Activated CD8-positive, alpha-beta T cell treated with anti-CD3 and anti-CD28 coated beads for 36 hours (primary cell): ENCODE measurements at regions of chr1 and their contacts with region 1.

Region 1: GRCh38 chr1:156728597-156729462 is at the start of gene ISG20L2:
- DNase-seq: peak; percentile 99
- ATAC-seq: peak; percentile 94
- H3K4me3 Mint-ChIP-seq: no peak within 1 kb of the TSS
- H3K27ac Mint-ChIP-seq: no peak within 1 kb of the TSS
- H3K4me1 Mint-ChIP-seq: peaks cover 23% of the 10 kb centered on the region
- H3K27me3 Mint-ChIP-seq: no peaks in the 10 kb centered on the region
- CTCF ChIP-seq: no peak
- total RNA-seq, gene ISG20L2: 40.6 to 44.5 TPM

Region 2: GRCh38 chr1:156652131-156652991 is 76.5 kb before region 1 on chr1:
- CTCF ChIA-PET with region 1: interaction called, 69 read pairs
- POLR2A ChIA-PET with region 1: no interaction called
- intact Hi-C with region 1: no loop called
- DNase-seq: peak; percentile 35
- ATAC-seq: no peak
- H3K4me3 Mint-ChIP-seq: no peak overlapping the region
- H3K27ac Mint-ChIP-seq: no peak overlapping the region
- H3K4me1 Mint-ChIP-seq: peaks cover 9% of the 10 kb centered on the region
- H3K27me3 Mint-ChIP-seq: peaks cover 74% of the 10 kb centered on the region
- CTCF ChIP-seq: no peak

Region 3: GRCh38 chr1:156689035-156689952 is 39.5 kb before region 1 on chr1:
- CTCF ChIA-PET with region 1: interaction called, 396 read pairs
- POLR2A ChIA-PET with region 1: interaction called, 9 read pairs
- intact Hi-C with region 1: loop called (anchors 2 kb)
- DNase-seq: peak; percentile 86
- ATAC-seq: peak; percentile 98
- H3K4me3 Mint-ChIP-seq: no peak overlapping the region
- H3K27ac Mint-ChIP-seq: no peak overlapping the region
- H3K4me1 Mint-ChIP-seq: peaks cover 29% of the 10 kb centered on the region
- H3K27me3 Mint-ChIP-seq: peaks cover 51% of the 10 kb centered on the region
- CTCF ChIP-seq: peak; percentile 95

Region 4: GRCh38 chr1:156746728-156747631 is 18.1 kb after region 1 on chr1:
- CTCF ChIA-PET with region 1: interaction called, 80 read pairs
- POLR2A ChIA-PET with region 1: interaction called, 89 read pairs
- intact Hi-C with region 1: no loop called
- DNase-seq: peak; percentile 85
- ATAC-seq: peak; percentile 22
- H3K4me3 Mint-ChIP-seq: peak overlapping the region; percentile 92
- H3K27ac Mint-ChIP-seq: peak overlapping the region; percentile 98
- H3K4me1 Mint-ChIP-seq: peaks cover 58% of the 10 kb centered on the region
- H3K27me3 Mint-ChIP-seq: no peaks in the 10 kb centered on the region
- CTCF ChIP-seq: no peak

Region 5: GRCh38 chr1:156773607-156774006 is 44.8 kb after region 1 on chr1:
- CTCF ChIA-PET with region 1: interaction called, 92 read pairs
- POLR2A ChIA-PET with region 1: interaction called, 35 read pairs
- intact Hi-C with region 1: loop called (anchors 5 kb)
- DNase-seq: no peak
- ATAC-seq: peak; percentile 25
- H3K4me3 Mint-ChIP-seq: no peak overlapping the region
- H3K27ac Mint-ChIP-seq: no peak overlapping the region
- H3K4me1 Mint-ChIP-seq: peaks cover 68% of the 10 kb centered on the region
- H3K27me3 Mint-ChIP-seq: no peaks in the 10 kb centered on the region
- CTCF ChIP-seq: peak; percentile 19

Region 6: DNA sequence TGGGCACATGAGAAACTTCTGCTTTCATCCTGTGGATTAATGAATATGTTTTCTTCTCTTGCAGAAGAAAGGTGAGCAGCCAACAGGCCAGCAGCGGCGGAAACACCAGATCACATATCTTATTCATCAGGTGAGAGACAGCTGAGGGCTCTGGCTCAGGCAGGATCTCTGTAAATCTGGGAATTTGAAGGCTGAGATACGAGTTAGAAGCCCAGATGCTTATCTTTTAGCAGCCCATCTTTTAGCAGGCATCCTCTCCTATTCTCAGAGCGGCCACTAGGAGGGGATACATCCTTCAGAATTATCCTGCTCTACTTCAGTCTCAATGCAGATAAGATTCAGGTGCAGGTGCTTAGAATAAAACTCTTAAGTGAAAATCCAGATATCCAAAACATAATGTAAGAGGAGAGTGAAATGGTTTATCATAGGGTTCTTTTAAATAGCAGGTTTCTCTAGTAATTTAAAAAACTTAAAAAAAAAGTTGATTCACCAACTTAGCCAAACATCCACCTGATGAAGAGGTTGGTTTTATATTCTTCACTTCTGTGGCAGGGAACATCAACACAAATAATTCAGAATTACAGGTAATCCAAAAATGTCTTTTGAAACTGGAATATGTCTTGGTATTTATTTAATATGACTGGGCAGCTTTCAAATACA is 68.5 kb after region 1 on chr1:
- CTCF ChIA-PET with region 1: interaction called, 25 read pairs
- POLR2A ChIA-PET with region 1: interaction called, 3 read pairs
- intact Hi-C with region 1: no loop called
- DNase-seq: peak; percentile 77
- ATAC-seq: peak; percentile 84
- H3K4me3 Mint-ChIP-seq: no peak overlapping the region
- H3K27ac Mint-ChIP-seq: no peak overlapping the region
- H3K4me1 Mint-ChIP-seq: peaks cover 6% of the 10 kb centered on the region
- H3K27me3 Mint-ChIP-seq: no peaks in the 10 kb centered on the region
- CTCF ChIP-seq: peak; percentile 91

Region 7: DNA sequence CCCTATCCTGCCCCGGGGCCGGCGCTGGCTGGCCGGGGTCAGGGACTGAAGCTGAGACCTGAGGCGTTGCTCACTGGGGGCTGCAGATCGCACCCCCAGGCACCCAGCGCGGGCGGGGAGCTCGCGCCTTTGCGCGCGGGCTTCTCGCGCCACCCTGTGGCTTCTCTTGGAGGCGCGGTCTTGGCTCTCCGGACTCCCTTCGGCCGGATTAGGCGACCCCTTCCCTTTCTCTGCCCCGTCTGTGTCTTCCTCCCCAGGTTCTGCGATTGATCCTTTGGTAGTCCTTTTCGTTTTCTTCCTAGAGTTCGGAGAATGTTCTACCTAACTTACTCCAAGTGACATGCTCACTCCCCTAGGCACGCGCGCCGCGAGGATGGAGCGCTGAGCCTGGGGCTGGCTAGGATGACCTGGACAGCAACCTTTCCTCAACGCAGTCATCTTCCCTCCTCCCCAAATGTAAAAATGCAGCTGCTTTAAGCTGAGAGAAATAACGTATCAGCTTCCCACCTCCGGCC is 131.3 kb after region 1 on chr1:
- CTCF ChIA-PET with region 1: interaction called, 101 read pairs
- POLR2A ChIA-PET with region 1: interaction called, 13 read pairs
- intact Hi-C with region 1: loop called (anchors 5 kb)
- DNase-seq: peak; percentile 64
- ATAC-seq: peak; percentile 57
- H3K4me3 Mint-ChIP-seq: peak overlapping the region; percentile 74
- H3K27ac Mint-ChIP-seq: no peak overlapping the region
- H3K4me1 Mint-ChIP-seq: peaks cover 42% of the 10 kb centered on the region
- H3K27me3 Mint-ChIP-seq: peaks cover 58% of the 10 kb centered on the region
- CTCF ChIP-seq: peak; percentile 97